ENCODE measurements at regions of chr7 and their contacts with region 1.

Region 1: DNA sequence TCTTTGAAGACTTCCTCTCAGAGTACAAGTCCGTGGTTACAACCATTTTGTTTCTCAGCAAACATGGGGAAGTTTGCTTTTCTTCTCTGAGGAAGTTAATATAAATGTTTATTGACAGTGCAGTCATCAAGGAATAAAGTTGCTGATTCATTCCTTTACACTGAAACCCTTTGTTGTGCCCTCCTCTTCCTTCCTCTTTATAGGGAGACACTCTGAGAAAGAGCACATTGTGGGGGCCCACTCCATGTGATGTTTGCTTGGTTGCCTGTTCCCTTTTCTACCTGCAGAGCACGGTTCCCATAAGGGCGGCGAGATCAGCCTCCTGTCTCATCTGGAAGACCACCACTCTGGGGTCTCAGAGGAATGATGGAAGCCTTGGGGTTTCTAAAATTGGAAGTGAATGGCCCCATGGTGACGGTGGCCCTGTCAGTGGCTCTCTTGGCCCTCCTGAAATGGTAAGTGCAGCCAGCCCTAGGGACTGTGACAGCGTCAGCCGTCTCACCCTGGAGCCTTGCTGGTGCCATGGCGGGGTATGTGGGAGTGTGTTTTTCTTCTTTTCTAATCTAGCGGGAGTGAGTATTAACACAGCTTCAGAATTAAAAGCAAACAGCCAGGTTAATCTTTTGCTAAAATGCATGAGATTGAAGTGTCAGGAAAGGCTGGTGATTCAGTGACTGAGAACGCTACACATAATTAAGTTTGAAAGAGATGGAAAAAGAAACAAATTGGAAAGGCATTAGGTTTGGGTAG is at the start of gene TBXAS1:
- DNase-seq: peak; percentile 42
- ATAC-seq: peak; percentile 64
- H3K4me3 Mint-ChIP-seq: peak within 1 kb of the TSS; percentile 72
- H3K27ac Mint-ChIP-seq: peak within 1 kb of the TSS; percentile 86
- H3K4me1 Mint-ChIP-seq: peaks cover 35% of the 10 kb centered on the region
- H3K27me3 Mint-ChIP-seq: no peaks in the 10 kb centered on the region
- total RNA-seq, gene TBXAS1: 3.6 to 5.1 TPM

Region 2: GRCh38 chr7:139613971-139614411 is 215.2 kb before region 1 on chr7:
- CTCF ChIA-PET with region 1: no interaction called
- POLR2A ChIA-PET with region 1: no interaction called
- intact Hi-C with region 1: no loop called
- DNase-seq: no peak
- ATAC-seq: no peak
- H3K4me3 Mint-ChIP-seq: no peak overlapping the region
- H3K27ac Mint-ChIP-seq: no peak overlapping the region
- H3K4me1 Mint-ChIP-seq: no peaks in the 10 kb centered on the region
- H3K27me3 Mint-ChIP-seq: no peaks in the 10 kb centered on the region

Region 3: GRCh38 chr7:139680676-139681462 is 148.3 kb before region 1 on chr7:
- CTCF ChIA-PET with region 1: no interaction called
- POLR2A ChIA-PET with region 1: no interaction called
- intact Hi-C with region 1: loop called in 1 of 2 experiments (anchors 1 kb)
- DNase-seq: peak; percentile 94
- ATAC-seq: peak; percentile 73
- H3K4me3 Mint-ChIP-seq: peak overlapping the region; percentile 68
- H3K27ac Mint-ChIP-seq: peak overlapping the region; percentile 98
- H3K4me1 Mint-ChIP-seq: peaks cover 53% of the 10 kb centered on the region
- H3K27me3 Mint-ChIP-seq: no peaks in the 10 kb centered on the region

Region 4: GRCh38 chr7:139777948-139778841 is 51.0 kb before region 1 on chr7 and contains the start of gene HIPK2:
- CTCF ChIA-PET with region 1: interaction called, 3 read pairs
- POLR2A ChIA-PET with region 1: interaction called, 3 read pairs
- intact Hi-C with region 1: loop called (anchors 2 kb)
- DNase-seq: peak; percentile 82
- ATAC-seq: peak; percentile 37
- H3K4me3 Mint-ChIP-seq: peak within 1 kb of the TSS; percentile 83
- H3K27ac Mint-ChIP-seq: peak within 1 kb of the TSS; percentile 93
- H3K4me1 Mint-ChIP-seq: peaks cover 41% of the 10 kb centered on the region
- H3K27me3 Mint-ChIP-seq: peaks cover 11% of the 10 kb centered on the region
- total RNA-seq, gene HIPK2: 23.9 to 36.2 TPM

Region 5: GRCh38 chr7:139987691-139988516 is 158.7 kb after region 1 on chr7:
- CTCF ChIA-PET with region 1: no interaction called
- POLR2A ChIA-PET with region 1: no interaction called
- intact Hi-C with region 1: loop called in 1 of 2 experiments (anchors 5 kb)
- DNase-seq: no peak
- ATAC-seq: no peak
- H3K4me3 Mint-ChIP-seq: no peak overlapping the region
- H3K27ac Mint-ChIP-seq: no peak overlapping the region
- H3K4me1 Mint-ChIP-seq: no peaks in the 10 kb centered on the region
- H3K27me3 Mint-ChIP-seq: no peaks in the 10 kb centered on the region

Region 6: DNA sequence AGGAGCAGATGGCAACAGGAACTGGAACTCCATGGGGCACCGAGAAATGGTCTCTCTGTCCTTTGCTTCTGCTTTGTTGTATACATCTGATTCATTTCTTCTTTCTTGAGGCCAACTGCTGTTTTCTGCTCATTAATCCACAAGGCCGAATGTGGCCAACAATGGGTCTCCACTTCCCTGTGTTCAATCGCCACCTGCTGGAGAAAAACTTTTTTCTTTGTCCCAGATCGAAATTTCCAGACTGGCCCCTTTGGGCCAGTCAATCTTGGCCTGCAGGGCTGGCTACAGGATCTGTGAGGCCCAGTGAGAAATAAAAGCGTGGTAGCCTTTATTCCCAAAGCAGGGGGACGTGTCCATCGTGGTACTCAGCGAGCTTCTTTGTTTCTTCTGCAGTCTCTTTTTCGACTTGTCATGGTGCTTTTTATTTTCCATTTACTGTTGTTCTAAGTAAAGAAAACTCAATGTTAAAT is 174.7 kb after region 1 on chr7:
- CTCF ChIA-PET with region 1: no interaction called
- POLR2A ChIA-PET with region 1: no interaction called
- intact Hi-C with region 1: loop called in 1 of 2 experiments (anchors 5 kb)
- DNase-seq: peak; percentile 53
- ATAC-seq: peak; percentile 16
- H3K4me3 Mint-ChIP-seq: no peak overlapping the region
- H3K27ac Mint-ChIP-seq: no peak overlapping the region
- H3K4me1 Mint-ChIP-seq: no peaks in the 10 kb centered on the region
- H3K27me3 Mint-ChIP-seq: no peaks in the 10 kb centered on the region

Measured in activated CD4-positive, alpha-beta T cell treated with anti-CD3 and anti-CD28 coated beads for 36 hours (primary cell).